Aorta (tissue), 5 donors: ENCODE measurements at regions of chr4 and their contacts with region 1.

Region 1: DNA sequence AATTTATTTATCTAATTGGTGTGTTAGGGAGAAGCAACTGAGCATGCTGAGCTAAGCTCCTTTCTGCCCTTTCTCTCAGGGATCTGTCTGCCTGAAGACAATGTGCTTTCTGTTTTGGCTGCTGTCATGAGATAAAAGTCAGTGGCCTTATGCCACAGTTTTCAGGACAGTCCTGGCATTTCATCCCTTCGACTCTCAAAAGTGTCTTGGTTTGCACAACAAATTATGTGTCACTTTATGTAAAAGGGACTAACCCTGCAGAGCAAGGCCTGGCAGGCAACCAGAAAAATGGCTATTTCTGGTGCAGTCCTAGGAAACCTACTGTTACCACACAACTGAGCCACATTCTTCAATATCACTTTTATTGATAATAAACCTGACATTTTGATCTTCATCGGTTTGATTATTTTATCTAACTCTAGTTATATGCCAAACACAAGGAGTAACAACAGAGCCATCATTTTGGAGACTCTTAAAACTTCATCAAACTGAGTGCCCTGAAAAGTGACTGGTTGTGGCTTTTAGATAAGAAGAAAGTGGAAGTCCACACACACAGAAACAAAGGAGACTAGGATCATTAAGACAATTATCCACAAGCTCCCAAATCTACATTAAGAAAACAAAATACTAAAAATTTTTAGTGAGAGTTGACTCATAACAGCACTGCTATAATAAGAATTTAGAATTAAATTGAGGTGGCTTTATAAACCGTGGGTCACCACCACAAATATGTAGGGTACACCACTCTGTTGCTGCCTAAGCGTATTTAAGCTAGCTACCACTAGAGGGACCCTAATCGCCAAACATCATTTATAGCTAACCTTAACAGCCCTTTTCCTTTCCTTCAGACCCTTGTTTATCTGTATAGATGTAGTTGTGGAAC is 95.9 kb upstream of the PTPN13 start:
- DNase-seq: peak in 1 of 2 donors; percentile 42
- ATAC-seq: peak; percentile 85
- H3K4me3 ChIP-seq: no peak overlapping the region
- H3K27ac ChIP-seq: no peak overlapping the region
- H3K4me1 ChIP-seq: no peaks in the 10 kb centered on the region
- H3K27me3 ChIP-seq: no peaks in the 10 kb centered on the region

Region 2: DNA sequence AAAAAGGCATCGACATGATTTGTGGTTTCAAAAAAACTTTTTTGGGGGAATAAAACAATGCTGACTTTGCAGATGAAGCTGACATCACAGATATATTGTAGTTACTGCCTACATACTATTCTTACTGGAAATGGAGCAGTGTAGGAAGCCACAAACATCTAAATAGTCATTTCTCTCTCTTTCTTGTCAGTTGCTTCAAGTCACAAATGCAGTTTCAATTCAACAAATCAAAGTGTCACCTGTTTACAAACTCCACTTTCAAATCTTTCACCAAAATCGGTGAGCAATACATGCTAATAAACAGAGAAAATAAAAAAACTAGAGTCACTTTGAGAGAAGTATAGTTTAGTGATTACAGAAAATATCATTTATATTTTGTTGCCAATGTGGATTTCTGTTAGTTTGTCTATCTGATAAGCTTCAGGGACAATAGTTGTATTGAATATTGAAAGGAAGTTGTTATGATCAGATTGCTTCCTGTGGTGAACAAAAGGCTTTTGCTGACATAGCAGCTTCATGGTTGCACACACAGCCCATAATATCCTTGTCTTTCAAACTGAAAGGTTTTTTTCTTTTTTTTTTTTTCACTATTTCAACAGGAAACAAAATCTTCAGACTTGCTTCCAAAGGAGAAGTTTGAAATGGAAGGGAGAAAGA is 46.2 kb after region 1 on chr4:
- intact Hi-C with region 1: no loop called
- DNase-seq: no peak
- ATAC-seq: no peak
- H3K4me3 ChIP-seq: no peak overlapping the region
- H3K27ac ChIP-seq: no peak overlapping the region
- H3K4me1 ChIP-seq: no peaks in the 10 kb centered on the region
- H3K27me3 ChIP-seq: no peaks in the 10 kb centered on the region

Region 3: DNA sequence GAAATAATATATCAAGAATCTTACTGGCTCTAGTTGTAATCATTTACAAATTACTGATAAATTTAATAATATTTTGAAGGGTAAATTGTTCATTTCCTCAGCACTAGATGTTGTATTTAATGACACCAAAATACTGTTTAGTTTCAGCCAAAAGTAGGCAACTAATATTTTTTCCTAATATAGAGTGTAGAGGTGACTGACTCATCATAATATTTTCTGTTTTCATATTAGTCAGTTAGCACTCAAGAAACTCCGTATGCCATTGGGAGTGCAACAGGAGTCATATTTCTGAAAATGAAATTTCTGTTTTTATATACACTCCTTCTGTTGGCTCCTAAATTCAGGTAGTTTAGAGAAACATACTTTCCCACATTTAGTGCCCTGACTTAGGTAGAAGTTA is 59.3 kb after region 1 on chr4:
- intact Hi-C with region 1: no loop called
- DNase-seq: no peak
- ATAC-seq: no peak
- H3K4me3 ChIP-seq: no peak overlapping the region
- H3K27ac ChIP-seq: no peak overlapping the region
- H3K4me1 ChIP-seq: no peaks in the 10 kb centered on the region
- H3K27me3 ChIP-seq: no peaks in the 10 kb centered on the region

Region 4: DNA sequence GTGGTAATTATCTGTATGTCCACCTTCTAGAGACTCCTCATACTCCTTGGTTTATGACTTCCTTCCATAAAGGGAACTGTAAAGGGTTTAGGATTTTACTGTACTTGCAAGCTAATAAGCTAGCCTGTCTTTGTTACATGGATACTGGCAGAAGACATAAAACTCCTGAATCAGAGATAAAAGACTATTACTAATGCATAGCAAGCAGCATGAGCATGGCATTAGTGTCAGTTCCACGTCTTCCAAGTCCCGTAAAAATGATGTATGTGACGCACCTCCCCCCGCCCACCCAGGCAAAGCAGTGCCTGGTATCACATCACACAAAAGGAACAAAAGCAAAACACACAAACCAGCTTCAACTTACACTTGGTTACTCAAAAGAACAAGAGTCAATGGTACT is 280.0 kb after region 1 on chr4:
- intact Hi-C with region 1: loop called in 1 of 2 experiments (anchors 10 kb)
- DNase-seq: no peak
- ATAC-seq: no peak
- H3K4me3 ChIP-seq: no peak overlapping the region
- H3K27ac ChIP-seq: no peak overlapping the region
- H3K4me1 ChIP-seq: no peaks in the 10 kb centered on the region
- H3K27me3 ChIP-seq: no peaks in the 10 kb centered on the region

Region 5: DNA sequence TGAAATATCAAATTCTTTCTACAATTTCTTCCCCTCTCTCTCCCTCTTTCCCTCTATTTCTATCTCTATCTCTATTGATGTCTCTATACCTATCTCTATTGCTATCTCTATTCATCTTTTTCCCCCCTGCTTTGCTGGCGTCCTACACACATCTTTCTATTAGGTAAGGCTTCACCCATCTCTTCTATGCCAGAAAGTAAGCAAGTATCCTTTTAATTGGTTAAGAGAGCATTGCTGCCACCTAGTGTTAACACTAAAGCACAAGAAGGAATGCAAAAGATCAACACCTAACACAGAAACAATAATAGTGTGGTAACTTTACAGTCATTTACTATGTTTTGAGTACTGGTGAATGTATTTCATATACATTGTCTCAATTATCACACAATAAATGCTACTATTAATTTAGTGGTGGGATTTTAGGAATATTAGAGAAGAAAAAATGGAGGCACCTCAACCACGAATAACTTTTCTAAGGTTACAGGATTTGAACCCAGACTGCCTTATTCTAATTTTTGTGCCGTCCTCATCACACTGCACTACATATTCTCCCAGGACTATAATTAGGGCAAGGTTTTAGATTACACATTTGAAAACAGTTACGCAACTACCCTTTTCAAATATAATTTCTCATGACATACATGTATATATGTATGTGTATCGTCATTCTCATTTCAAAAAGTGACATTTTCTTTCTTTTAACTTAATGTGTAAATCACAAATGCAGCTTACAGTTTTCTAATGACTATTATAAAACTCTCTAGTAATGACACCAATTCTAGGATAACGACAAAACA is 397.7 kb after region 1 on chr4:
- intact Hi-C with region 1: loop called (anchors 2 kb)
- DNase-seq: no peak
- ATAC-seq: peak; percentile 73
- H3K4me3 ChIP-seq: no peak overlapping the region
- H3K27ac ChIP-seq: no peak overlapping the region
- H3K4me1 ChIP-seq: no peaks in the 10 kb centered on the region
- H3K27me3 ChIP-seq: no peaks in the 10 kb centered on the region

Region 6: GRCh38 chr4:86901866-86902265 is 403.6 kb after region 1 on chr4:
- intact Hi-C with region 1: loop called in 1 of 2 experiments (anchors 2 kb)
- DNase-seq: no peak
- ATAC-seq: no peak
- H3K4me3 ChIP-seq: no peak overlapping the region
- H3K27ac ChIP-seq: no peak overlapping the region
- H3K4me1 ChIP-seq: no peaks in the 10 kb centered on the region
- H3K27me3 ChIP-seq: no peaks in the 10 kb centered on the region

Region 7: GRCh38 chr4:87093443-87094123 is 595.4 kb after region 1 on chr4:
- intact Hi-C with region 1: no loop called
- DNase-seq: no peak
- ATAC-seq: peak; percentile 77
- H3K4me3 ChIP-seq: no peak overlapping the region
- H3K27ac ChIP-seq: no peak overlapping the region
- H3K4me1 ChIP-seq: peaks cover 0 to 2% of the 10 kb centered on the region in 2 donors
- H3K27me3 ChIP-seq: no peaks in the 10 kb centered on the region

Region 8: GRCh38 chr4:87220094-87220822 is 722.0 kb after region 1 on chr4 and contains the start of gene KLHL8:
- intact Hi-C with region 1: loop called in 1 of 2 experiments (anchors 10 kb)
- DNase-seq: peak; percentile 92 to 95
- ATAC-seq: peak; percentile 98
- H3K4me3 ChIP-seq: peak within 1 kb of the TSS; percentile 70 to 89
- H3K27ac ChIP-seq: peak within 1 kb of the TSS; percentile 38 to 73
- H3K4me1 ChIP-seq: no peaks in the 10 kb centered on the region
- H3K27me3 ChIP-seq: no peaks in the 10 kb centered on the region
- total RNA-seq, gene KLHL8: 11.0 to 11.4 TPM